ENCODE measurements at regions of chr19 and their contacts with region 1.

Region 1: DNA sequence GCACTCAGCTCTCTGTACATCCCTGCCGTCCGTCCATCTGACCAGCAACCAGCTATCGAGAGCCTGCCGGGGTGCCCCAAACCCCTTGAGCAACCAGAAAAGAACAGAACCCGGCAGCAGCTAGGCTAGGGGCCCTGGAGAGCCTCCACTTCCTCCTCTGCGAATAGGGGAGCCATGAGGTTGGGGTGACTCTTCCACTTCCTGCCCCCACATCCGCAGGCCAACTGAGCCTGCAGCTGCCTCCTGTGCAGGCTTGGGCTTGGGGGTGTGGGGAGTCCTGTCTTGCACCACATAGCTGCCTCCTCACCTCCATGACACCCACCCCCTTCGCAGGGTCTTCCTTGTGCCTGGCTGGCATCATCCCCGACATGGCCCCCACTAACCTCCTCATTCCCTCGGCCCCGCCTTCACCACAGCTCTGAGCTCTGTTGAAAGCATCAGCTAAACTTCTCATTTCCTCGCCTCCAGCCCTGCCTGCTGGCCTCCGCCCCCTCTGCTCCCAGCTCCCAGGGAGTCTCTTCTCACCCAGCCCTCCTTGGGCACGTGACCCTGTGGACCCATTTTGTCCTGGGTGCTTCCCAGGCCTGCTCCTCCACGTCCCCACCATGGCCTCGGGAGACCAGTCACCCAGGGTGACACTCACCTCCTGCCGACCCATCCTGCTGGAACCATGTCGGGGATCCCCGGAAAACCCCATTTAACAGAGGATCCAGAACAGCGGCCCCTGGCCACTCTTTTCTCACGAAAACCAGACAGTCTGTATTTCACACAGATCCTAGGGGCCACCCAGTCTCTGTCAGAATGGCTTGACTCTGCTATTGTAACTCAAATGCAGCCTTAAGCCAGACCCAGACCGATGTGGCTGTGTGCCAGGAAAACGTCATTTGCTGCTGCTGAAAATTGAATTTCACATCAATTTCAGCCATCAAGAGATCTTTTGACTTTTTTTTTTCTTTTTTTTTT is 50.4 kb downstream of the MYO9B start:
- DNase-seq: peak; percentile 95
- H3K4me3 ChIP-seq: peak overlapping the region in 7 of 8 donors; percentile 14 to 58 (median 23)
- H3K27ac ChIP-seq: peak overlapping the region; percentile 90 to 93 (median 91)
- H3K4me1 ChIP-seq: peaks cover 31 to 100% (median 63%) of the 10 kb centered on the region in 6 donors
- H3K27me3 ChIP-seq: no peaks in the 10 kb centered on the region
- CTCF ChIP-seq: no peak
- POLR2A ChIP-seq: no peak

Region 2: DNA sequence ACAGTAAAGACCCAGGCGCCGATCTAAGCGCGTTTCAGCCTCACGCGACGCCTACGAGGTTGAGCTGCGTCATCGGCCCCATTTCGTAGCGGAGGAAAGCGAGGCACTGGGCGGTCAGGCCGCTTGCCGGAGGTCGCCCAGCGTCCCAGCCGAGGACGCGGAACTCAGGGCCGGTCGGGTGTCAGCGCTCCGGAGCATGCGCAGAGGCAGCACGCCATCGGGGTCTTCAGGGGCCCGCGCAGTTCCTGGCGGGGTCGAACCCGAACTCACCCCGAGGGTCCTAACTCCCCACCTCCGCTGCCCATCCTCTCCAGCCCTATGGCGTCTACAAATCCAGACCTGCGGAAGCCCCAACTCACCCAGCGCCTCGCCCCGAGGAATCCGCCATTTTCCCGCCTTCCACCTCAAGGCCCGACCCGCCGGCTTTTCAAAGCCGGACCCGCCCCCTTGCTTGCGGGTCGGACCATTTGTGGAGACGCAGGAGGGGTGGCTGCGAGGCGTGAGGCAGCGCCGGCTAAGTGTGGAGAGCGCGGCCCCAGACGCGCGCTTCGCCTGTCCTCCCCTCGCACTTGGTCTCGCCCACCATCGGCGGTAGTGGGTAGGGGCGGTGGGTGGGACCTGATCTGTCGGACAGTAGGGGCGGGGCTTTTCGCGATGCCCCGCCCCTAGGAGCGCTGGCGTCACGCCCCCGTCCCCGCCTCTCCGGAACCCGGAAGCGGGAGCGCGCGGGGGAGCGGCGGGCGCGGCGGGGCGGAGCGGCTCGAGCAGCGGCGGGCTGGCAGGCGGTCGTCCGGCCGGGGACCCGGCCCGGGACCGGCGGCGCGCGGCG is 50.7 kb before region 1 on chr19 and contains the starts of genes HAUS8 and MYO9B:
- intact Hi-C with region 1: loop called (anchors 5 kb)
- DNase-seq: peak; percentile 100
- H3K4me3 ChIP-seq: peak within 1 kb of the TSS; percentile 59 to 96 (median 90)
- H3K27ac ChIP-seq: peak within 1 kb of the TSS; percentile 81 to 97 (median 90)
- H3K4me1 ChIP-seq: peaks cover 39 to 73% (median 57%) of the 10 kb centered on the region in 6 donors
- H3K27me3 ChIP-seq: no peaks in the 10 kb centered on the region
- CTCF ChIP-seq: peak in 2 of 11 experiments; percentile 17 to 18
- POLR2A ChIP-seq: peak in 2 of 3 donors; percentile 47 to 61
- total RNA-seq, gene HAUS8: 7.7 to 15.3 (median 13.2) TPM
- total RNA-seq, gene MYO9B: 232 to 329 (median 281) TPM